Psoas muscle (tissue), 8 donors: ENCODE measurements at regions of chr6 and their contacts with region 1.

Region 1: GRCh38 chr6:17556014-17556413 is 44.1 kb upstream of the FAM8A1 start:
- DNase-seq: no peak
- ATAC-seq: no peak
- H3K4me3 ChIP-seq: no peak overlapping the region
- H3K27ac ChIP-seq: no peak overlapping the region
- H3K4me1 ChIP-seq: no peaks in the 10 kb centered on the region
- H3K27me3 ChIP-seq: no peaks in the 10 kb centered on the region
- CTCF ChIP-seq: no peak

Region 2: GRCh38 chr6:17519120-17519519 is 36.9 kb before region 1 on chr6:
- intact Hi-C with region 1: loop called in 1 of 2 experiments (anchors 5 kb)
- DNase-seq: no peak
- ATAC-seq: peak; percentile 20 to 29 (median 26)
- H3K4me3 ChIP-seq: no peak overlapping the region
- H3K27ac ChIP-seq: no peak overlapping the region
- H3K4me1 ChIP-seq: no peaks in the 10 kb centered on the region
- H3K27me3 ChIP-seq: no peaks in the 10 kb centered on the region
- CTCF ChIP-seq: no peak